Activated B cell treated with CpG ODN at 0.5 μM for 24 hours (primary cell): ENCODE measurements at regions of chr14 and their contacts with region 1.

Region 1: DNA sequence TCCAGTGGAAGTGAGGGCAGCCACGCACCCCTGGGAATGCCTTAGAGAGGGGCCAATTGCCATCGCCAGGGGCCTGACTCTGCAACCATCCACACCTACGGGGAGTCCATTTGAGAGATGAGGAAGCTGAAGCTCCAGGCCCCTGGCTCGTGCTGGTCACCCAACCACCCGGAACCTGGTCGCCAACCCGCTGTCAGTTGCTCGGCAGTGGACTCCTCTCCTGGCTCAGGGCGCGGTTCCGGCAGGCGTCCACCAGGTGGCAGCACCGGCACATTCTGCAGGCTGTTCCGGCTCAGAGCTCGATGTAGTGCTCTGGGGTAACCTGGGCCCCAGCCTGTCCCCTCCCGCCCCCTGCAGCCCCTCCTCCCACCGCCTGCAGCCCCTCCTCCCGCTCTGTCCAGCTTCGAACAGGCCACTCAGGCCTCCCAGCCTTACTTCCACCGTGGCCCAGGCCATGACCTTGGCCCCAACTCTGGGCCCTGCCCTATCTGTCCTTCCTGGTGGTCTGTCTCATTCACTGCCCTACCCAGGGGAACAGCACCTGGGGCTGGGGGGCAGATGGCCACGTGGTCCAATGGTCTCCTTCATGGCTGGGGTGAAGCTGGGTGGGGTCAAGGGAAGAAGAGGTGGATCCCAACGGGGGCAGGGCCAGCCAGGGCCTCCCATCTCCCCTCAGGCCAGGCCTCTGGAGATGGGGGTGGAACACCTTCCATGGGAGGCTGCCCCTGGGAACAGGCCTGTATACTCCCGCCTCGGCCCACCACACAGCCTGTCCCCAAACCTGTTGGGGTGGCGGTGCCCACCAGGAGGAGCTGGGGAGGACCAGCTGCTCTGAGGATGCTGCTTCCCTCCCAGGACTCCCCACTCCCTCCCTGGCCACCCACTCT is 15.7 kb downstream of the SIVA1 start:
- DNase-seq: peak; percentile 90
- ATAC-seq: peak; percentile 98
- H3K4me3 Mint-ChIP-seq: no peak overlapping the region
- H3K27ac Mint-ChIP-seq: no peak overlapping the region
- H3K4me1 Mint-ChIP-seq: peaks cover 3% of the 10 kb centered on the region
- H3K27me3 Mint-ChIP-seq: no peaks in the 10 kb centered on the region
- CTCF ChIP-seq: no peak

Region 2: GRCh38 chr14:104800015-104800770 is 31.5 kb after region 1 on chr14:
- CTCF ChIA-PET with region 1: interaction called, 3 read pairs
- POLR2A ChIA-PET with region 1: no interaction called
- intact Hi-C with region 1: loop called (anchors 2 kb)
- DNase-seq: peak; percentile 78
- ATAC-seq: peak; percentile 76
- H3K4me3 Mint-ChIP-seq: peak overlapping the region; percentile 73
- H3K27ac Mint-ChIP-seq: peak overlapping the region; percentile 87
- H3K4me1 Mint-ChIP-seq: peaks cover 47% of the 10 kb centered on the region
- H3K27me3 Mint-ChIP-seq: no peaks in the 10 kb centered on the region
- CTCF ChIP-seq: no peak

Region 3: GRCh38 chr14:104826189-104826860 is 57.6 kb after region 1 on chr14:
- CTCF ChIA-PET with region 1: interaction called, 59 read pairs
- POLR2A ChIA-PET with region 1: interaction called, 13 read pairs
- intact Hi-C with region 1: loop called (anchors 1 kb)
- DNase-seq: peak; percentile 97
- ATAC-seq: peak; percentile 87
- H3K4me3 Mint-ChIP-seq: peak overlapping the region; percentile 77
- H3K27ac Mint-ChIP-seq: no peak overlapping the region
- H3K4me1 Mint-ChIP-seq: peaks cover 20% of the 10 kb centered on the region
- H3K27me3 Mint-ChIP-seq: peaks cover 9% of the 10 kb centered on the region
- CTCF ChIP-seq: no peak

Region 4: DNA sequence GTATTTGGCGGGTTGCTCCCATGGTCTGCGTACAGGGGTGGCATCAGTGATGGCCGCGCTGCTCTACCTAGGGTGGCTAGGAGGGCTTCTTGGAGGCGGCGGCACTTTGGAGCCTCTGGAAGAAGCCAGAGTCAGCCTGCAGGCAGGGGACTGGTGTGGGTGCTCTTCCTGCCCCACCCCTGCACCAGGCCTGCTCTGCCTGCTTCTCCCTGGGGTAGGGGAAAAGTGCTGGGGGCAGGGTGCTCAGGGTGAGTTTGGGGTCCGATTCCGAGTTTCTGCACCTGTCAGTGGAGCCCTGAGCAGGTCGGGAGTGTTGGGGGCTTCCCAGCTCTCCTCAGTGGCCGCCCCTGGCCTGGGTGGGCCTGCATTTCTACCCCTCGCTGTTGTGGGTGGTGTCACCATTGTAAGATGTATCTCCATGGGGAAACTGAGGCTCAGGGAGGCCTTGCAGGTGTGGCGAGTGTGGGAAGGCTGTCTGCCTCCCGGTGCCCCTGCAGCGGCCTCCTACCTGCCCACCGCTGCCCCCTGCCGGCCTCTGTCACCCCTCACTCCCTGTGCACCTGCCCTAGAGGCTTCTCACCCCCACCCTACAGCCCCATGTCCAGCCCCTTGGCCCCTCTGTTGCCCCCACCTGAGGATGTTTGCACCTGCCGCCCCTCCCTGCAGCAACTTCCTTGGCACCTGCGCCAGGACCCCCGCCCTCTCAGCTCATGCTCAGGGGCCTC is 101.9 kb after region 1 on chr14:
- CTCF ChIA-PET with region 1: interaction called, 4 read pairs
- POLR2A ChIA-PET with region 1: no interaction called
- intact Hi-C with region 1: loop called (anchors 1 kb)
- DNase-seq: peak; percentile 44
- ATAC-seq: peak; percentile 60
- H3K4me3 Mint-ChIP-seq: no peak overlapping the region
- H3K27ac Mint-ChIP-seq: no peak overlapping the region
- H3K4me1 Mint-ChIP-seq: peaks cover 10% of the 10 kb centered on the region
- H3K27me3 Mint-ChIP-seq: peaks cover 34% of the 10 kb centered on the region
- CTCF ChIP-seq: no peak

Region 5: GRCh38 chr14:104895786-104896661 is 127.3 kb after region 1 on chr14:
- CTCF ChIA-PET with region 1: no interaction called
- POLR2A ChIA-PET with region 1: no interaction called
- intact Hi-C with region 1: loop called (anchors 1 kb)
- DNase-seq: no peak
- ATAC-seq: no peak
- H3K4me3 Mint-ChIP-seq: no peak overlapping the region
- H3K27ac Mint-ChIP-seq: no peak overlapping the region
- H3K4me1 Mint-ChIP-seq: peaks cover 6% of the 10 kb centered on the region
- H3K27me3 Mint-ChIP-seq: peaks cover 5% of the 10 kb centered on the region
- CTCF ChIP-seq: no peak